GM12878 (cell line): ENCODE measurements at regions of chr2 and their contacts with region 1.

Region 1: GRCh38 chr2:170235860-170236679 is 58.1 kb downstream of the MYO3B start:
- DNase-seq: no peak
- ATAC-seq: peak; percentile 88
- H3K4me3 ChIP-seq: no peak overlapping the region
- H3K27ac ChIP-seq: no peak overlapping the region
- H3K4me1 ChIP-seq: no peaks in the 10 kb centered on the region
- H3K27me3 ChIP-seq: no peaks in the 10 kb centered on the region
- CTCF ChIP-seq: peak; percentile 62 to 68 (median 65)
- EP300 ChIP-seq: no peak
- POLR2A ChIP-seq: no peak
- RAD21 ChIP-seq: peak; percentile 91

Region 2: DNA sequence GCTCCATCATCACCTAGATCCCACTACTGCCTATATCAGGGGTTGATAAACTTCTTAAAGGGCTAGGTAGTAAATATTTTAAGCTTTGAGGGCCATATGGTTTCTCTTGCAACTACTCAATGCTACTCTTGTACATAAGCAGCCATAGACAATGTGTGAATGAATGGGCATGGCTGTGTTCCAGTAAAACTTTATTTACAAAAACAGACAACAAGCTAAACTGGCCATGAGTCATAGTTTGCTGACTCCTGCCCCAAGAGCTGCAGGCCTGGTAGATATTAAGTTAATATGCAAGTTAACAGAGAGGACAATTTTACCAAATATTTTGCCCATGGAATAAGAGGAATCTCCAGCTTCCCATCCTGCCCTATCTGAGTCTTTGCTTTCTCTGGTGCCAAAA is 87.9 kb before region 1 on chr2:
- CTCF ChIA-PET with region 1: interaction called, 15 read pairs
- POLR2A ChIA-PET with region 1: no interaction called
- RAD21 ChIA-PET with region 1: interaction called, 3 read pairs
- SMC1A ChIA-PET with region 1: interaction called, 5 read pairs
- in situ Hi-C with region 1: no loop called
- intact Hi-C with region 1: no loop called
- DNase-seq: no peak
- ATAC-seq: no peak
- H3K4me3 ChIP-seq: no peak overlapping the region
- H3K27ac ChIP-seq: no peak overlapping the region
- H3K4me1 ChIP-seq: peaks cover 21% of the 10 kb centered on the region
- H3K27me3 ChIP-seq: no peaks in the 10 kb centered on the region
- CTCF ChIP-seq: no peak
- EP300 ChIP-seq: no peak
- POLR2A ChIP-seq: no peak
- RAD21 ChIP-seq: no peak

Region 3: DNA sequence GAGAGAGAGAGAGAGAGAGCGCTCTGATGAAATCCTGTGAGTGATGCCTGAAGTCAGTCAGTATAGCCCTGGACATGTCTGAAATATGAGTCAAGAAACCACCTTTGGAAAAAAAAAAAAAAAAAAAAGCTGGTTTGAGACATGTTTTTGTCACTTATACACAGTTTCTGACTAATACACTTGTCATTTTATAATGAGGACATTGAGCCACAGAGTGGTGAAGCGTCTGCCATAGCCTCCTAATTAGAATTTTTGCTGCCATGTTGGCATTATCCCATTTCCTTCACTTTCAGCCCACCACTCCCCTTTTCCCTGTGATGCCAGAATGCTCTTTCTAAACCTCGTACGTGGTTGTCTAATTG is 73.8 kb before region 1 on chr2:
- CTCF ChIA-PET with region 1: interaction called, 4 read pairs
- POLR2A ChIA-PET with region 1: interaction called, 4 read pairs
- RAD21 ChIA-PET with region 1: interaction called, 7 read pairs
- SMC1A ChIA-PET with region 1: interaction called, 14 read pairs
- in situ Hi-C with region 1: no loop called
- intact Hi-C with region 1: no loop called
- DNase-seq: no peak
- ATAC-seq: no peak
- H3K4me3 ChIP-seq: no peak overlapping the region
- H3K27ac ChIP-seq: no peak overlapping the region
- H3K4me1 ChIP-seq: peaks cover 36% of the 10 kb centered on the region
- H3K27me3 ChIP-seq: no peaks in the 10 kb centered on the region
- CTCF ChIP-seq: no peak
- EP300 ChIP-seq: no peak
- POLR2A ChIP-seq: no peak
- RAD21 ChIP-seq: no peak

Region 4: DNA sequence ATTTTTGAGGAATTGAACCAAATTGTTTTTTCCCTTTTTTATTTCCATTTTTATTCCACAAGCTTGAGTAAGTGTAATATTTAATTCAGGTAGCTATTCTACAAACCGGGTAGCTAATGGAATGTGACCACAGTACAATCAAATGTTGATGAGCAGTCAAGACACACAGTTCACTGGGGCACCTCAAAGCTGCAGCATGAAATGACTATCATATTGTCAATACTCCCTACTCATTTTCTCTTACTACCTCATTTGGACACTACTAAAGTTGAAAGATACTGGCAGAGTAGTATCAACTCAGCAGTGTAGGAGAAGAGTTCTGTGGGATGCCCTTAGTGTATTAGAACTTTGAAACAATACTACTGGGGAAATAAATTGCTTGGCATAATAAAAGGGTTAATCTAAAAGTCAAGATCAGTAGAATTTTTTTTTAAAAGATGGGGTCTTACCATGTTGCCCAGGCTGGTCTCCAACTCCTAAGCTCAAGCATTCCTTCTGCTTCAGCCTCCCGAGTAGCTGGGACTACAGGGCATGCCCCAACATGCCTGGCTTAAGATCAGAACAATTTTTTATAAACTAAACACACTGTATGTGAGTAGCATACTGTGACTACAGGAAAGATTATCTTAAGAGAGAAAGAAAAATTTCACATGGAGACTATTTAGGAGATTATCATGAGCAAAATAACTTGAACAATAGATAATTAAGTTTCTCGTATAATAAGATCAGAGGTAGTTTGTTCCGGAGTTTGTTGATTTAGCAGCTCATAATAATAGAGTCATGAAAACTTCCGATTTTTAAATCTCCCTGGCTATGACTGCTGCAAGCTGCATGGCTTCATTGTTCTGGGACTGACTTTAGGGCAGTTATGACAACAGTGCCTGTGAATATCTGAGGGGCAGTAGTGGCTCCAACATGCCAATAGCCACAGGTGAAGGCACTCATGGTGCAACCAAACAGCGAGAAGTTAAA is 14.5 kb before region 1 on chr2:
- CTCF ChIA-PET with region 1: interaction called, 11 read pairs
- POLR2A ChIA-PET with region 1: interaction called, 8 read pairs
- RAD21 ChIA-PET with region 1: interaction called, 5 read pairs
- SMC1A ChIA-PET with region 1: interaction called, 22 read pairs
- in situ Hi-C with region 1: no loop called
- intact Hi-C with region 1: no loop called
- DNase-seq: no peak
- ATAC-seq: peak; percentile 56
- H3K4me3 ChIP-seq: no peak overlapping the region
- H3K27ac ChIP-seq: peak overlapping the region; percentile 31; the same call in 1 of the 2 replicates
- H3K4me1 ChIP-seq: peaks cover 7% of the 10 kb centered on the region
- H3K27me3 ChIP-seq: no peaks in the 10 kb centered on the region
- CTCF ChIP-seq: no peak
- EP300 ChIP-seq: no peak
- POLR2A ChIP-seq: no peak
- RAD21 ChIP-seq: no peak

Region 5: DNA sequence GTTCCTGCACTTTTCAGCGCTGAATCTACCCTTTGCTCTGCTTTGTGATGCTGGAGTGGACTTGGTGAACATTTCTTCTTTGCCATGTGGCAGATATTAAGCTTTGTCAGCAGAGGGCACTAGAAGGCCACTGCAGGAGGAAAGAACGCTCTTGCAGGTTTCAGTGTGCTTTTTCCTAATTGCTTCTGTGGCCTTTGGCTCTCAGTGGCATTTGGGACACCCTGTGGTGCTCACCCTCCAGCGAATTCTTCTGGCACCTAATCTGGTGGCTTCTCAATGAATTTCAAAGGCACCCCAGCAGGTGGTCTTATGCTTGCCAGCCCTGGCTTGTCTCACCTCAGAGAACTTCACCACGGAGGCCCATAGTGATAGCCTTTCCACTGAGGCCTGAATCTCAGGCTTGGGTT is 88.6 kb after region 1 on chr2:
- CTCF ChIA-PET with region 1: interaction called, 29 read pairs
- POLR2A ChIA-PET with region 1: no interaction called
- RAD21 ChIA-PET with region 1: interaction called, 15 read pairs
- SMC1A ChIA-PET with region 1: interaction called, 32 read pairs
- in situ Hi-C with region 1: no loop called
- intact Hi-C with region 1: loop called (anchors 1 kb)
- DNase-seq: no peak
- ATAC-seq: peak; percentile 89
- H3K4me3 ChIP-seq: no peak overlapping the region
- H3K27ac ChIP-seq: no peak overlapping the region
- H3K4me1 ChIP-seq: no peaks in the 10 kb centered on the region
- H3K27me3 ChIP-seq: no peaks in the 10 kb centered on the region
- CTCF ChIP-seq: peak; percentile 80 to 88 (median 84)
- EP300 ChIP-seq: no peak
- POLR2A ChIP-seq: no peak
- RAD21 ChIP-seq: peak; percentile 97

Region 6: GRCh38 chr2:170715062-170715931 is 479.2 kb after region 1 on chr2 and contains the start of gene SP5:
- CTCF ChIA-PET with region 1: no interaction called
- POLR2A ChIA-PET with region 1: no interaction called
- RAD21 ChIA-PET with region 1: no interaction called
- SMC1A ChIA-PET with region 1: no interaction called
- in situ Hi-C with region 1: no loop called
- intact Hi-C with region 1: loop called (anchors 5 kb)
- DNase-seq: no peak
- ATAC-seq: peak; percentile 53
- H3K4me3 ChIP-seq: peak within 1 kb of the TSS; percentile 55; the same call in 1 of the 2 replicates
- H3K27ac ChIP-seq: no peak within 1 kb of the TSS
- H3K4me1 ChIP-seq: no peaks in the 10 kb centered on the region; the same call in 1 of the 2 replicates
- H3K27me3 ChIP-seq: peaks cover 29 to 39% of the 10 kb centered on the region in 2 experiments
- CTCF ChIP-seq: no peak
- EP300 ChIP-seq: no peak
- POLR2A ChIP-seq: no peak
- RAD21 ChIP-seq: no peak
- polyA plus RNA-seq, gene SP5: not detected